ENCODE measurements at regions of chr5 and their contacts with region 1.

Region 1: DNA sequence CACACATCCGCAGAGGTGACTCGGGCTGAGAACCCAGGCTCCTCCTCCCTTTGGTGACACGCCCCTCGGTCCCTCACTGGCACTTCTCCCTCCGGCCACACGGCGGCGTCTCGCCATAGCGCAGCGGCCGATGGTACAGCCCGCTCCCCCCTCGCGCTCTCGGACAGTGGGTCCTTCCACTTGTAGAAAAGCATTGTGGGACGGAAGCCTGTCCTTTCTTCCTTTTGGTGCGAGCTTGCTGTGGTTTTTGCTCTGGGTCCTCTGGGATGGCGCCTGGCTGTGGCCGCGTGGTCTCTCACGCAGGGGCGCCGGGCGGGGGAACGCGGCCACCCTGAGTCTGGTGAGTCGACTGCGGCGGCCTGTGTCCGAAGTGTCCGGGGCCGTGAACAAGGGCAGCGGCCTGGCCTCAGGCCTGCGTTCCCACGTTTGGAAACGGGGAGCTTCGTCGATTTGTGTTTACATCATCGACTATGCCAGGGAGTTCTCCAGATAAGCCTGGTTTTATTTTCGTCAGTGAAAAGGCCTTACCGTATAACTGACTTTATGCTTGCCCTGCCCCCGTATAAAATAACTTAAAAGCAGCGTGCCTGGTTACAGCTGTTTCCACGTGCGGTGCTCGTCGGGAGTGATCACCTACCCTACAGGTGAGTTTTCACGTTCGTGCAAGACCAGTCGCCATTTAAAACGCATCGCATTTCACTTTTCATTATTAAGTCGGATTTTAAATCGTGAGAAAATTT is 258.3 kb downstream of the EPB41L4A start:
- DNase-seq: peak; percentile 93
- ATAC-seq: peak; percentile 99
- H3K4me3 Mint-ChIP-seq: peak overlapping the region; percentile 97
- H3K27ac Mint-ChIP-seq: peak overlapping the region; percentile 82
- H3K4me1 Mint-ChIP-seq: peaks cover 25% of the 10 kb centered on the region
- H3K27me3 Mint-ChIP-seq: no peaks in the 10 kb centered on the region
- CTCF ChIP-seq: peak; percentile 89

Region 2: DNA sequence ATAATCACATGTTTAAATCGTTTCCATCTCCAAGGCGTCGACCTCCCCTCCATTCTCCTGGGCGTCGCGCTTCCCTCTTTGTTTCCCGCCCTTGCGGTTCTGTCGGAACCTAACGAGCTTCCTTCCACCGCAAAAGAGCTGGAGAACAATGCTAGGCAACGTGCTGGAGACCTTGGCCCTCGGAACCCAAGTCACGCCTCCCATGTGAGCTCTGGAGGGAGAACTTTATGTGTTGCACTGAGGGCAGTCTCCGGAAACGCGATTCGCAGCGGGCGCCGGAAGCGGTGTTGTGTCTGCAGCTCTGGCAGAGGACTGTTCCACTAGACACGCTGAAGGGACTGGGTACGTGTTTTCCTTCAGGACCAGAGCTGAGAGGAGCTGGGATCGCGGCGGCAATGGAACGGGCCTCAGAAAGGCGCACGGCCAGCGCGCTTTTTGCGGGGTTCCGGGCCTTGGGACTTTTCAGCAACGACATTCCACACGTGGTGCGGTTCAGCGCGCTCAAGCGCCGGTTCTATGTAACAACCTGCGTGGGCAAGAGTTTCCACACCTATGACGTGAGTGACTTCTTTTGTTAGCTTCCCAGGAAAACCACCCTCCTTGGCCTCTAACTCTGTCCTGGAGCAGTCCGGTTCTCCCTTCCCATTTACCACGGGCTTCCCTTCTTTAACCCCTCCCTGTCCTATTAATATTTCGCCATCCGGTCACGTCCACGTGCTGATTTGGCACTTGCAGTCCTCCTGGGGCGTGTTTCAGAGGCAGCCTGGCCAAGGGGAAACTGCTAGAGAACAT is 1068.6 kb before region 1 on chr5 and contains the start of gene WDR36:
- CTCF ChIA-PET with region 1: no interaction called
- POLR2A ChIA-PET with region 1: no interaction called
- intact Hi-C with region 1: loop called (anchors 1 kb)
- DNase-seq: peak; percentile 88
- ATAC-seq: peak; percentile 95
- H3K4me3 Mint-ChIP-seq: peak within 1 kb of the TSS; percentile 96
- H3K27ac Mint-ChIP-seq: peak within 1 kb of the TSS; percentile 90
- H3K4me1 Mint-ChIP-seq: peaks cover 31% of the 10 kb centered on the region
- H3K27me3 Mint-ChIP-seq: peaks cover 6% of the 10 kb centered on the region
- CTCF ChIP-seq: no peak
- total RNA-seq, gene WDR36: 42.6 and 48.6 TPM in 2 replicates

Region 3: GRCh38 chr5:111530298-111530740 is 630.5 kb before region 1 on chr5:
- CTCF ChIA-PET with region 1: interaction called, 8 read pairs
- POLR2A ChIA-PET with region 1: interaction called, 3 read pairs
- intact Hi-C with region 1: loop called (anchors 1 kb)
- DNase-seq: peak; percentile 61
- ATAC-seq: peak; percentile 100
- H3K4me3 Mint-ChIP-seq: peak overlapping the region; percentile 49
- H3K27ac Mint-ChIP-seq: peak overlapping the region; percentile 75
- H3K4me1 Mint-ChIP-seq: peaks cover 23% of the 10 kb centered on the region
- H3K27me3 Mint-ChIP-seq: no peaks in the 10 kb centered on the region
- CTCF ChIP-seq: no peak

Region 4: GRCh38 chr5:112419986-112420864 is 259.4 kb after region 1 on chr5:
- CTCF ChIA-PET with region 1: interaction called, 18 read pairs
- POLR2A ChIA-PET with region 1: interaction called, 9 read pairs
- intact Hi-C with region 1: loop called (anchors 1 kb)
- DNase-seq: peak; percentile 68
- ATAC-seq: peak; percentile 84
- H3K4me3 Mint-ChIP-seq: peak overlapping the region; percentile 86
- H3K27ac Mint-ChIP-seq: no peak overlapping the region
- H3K4me1 Mint-ChIP-seq: peaks cover 11% of the 10 kb centered on the region
- H3K27me3 Mint-ChIP-seq: peaks cover 14% of the 10 kb centered on the region
- CTCF ChIP-seq: no peak

Region 5: GRCh38 chr5:113513384-113514288 is 1352.8 kb after region 1 on chr5 and contains the start of gene YTHDC2:
- CTCF ChIA-PET with region 1: no interaction called
- POLR2A ChIA-PET with region 1: no interaction called
- intact Hi-C with region 1: loop called (anchors 5 kb)
- DNase-seq: peak; percentile 86
- ATAC-seq: peak; percentile 98
- H3K4me3 Mint-ChIP-seq: peak within 1 kb of the TSS; percentile 92
- H3K27ac Mint-ChIP-seq: peak within 1 kb of the TSS; percentile 87
- H3K4me1 Mint-ChIP-seq: peaks cover 28% of the 10 kb centered on the region
- H3K27me3 Mint-ChIP-seq: peaks cover 12% of the 10 kb centered on the region
- CTCF ChIP-seq: no peak
- total RNA-seq, gene YTHDC2: 41.7 and 44.8 TPM in 2 replicates